ENCODE measurements at regions of chr2 and their contacts with region 1.

Region 1: GRCh38 chr2:157336137-157337010 is 10.8 kb upstream of the ERMN start:
- DNase-seq: peak; percentile 21
- H3K4me3 ChIP-seq: peak overlapping the region in 1 of 2 experiments; percentile 40; a peak in 1 of 4 replicates
- H3K27ac ChIP-seq: no peak overlapping the region
- H3K4me1 ChIP-seq: no peaks in the 10 kb centered on the region
- H3K27me3 ChIP-seq: no peaks in the 10 kb centered on the region; the same call in 1 of the 2 replicates
- CTCF ChIP-seq: peak; percentile 80
- EP300 ChIP-seq: no peak
- RAD21 ChIP-seq: peak; percentile 38

Region 2: GRCh38 chr2:157158111-157158510 is 178.3 kb before region 1 on chr2:
- CTCF ChIA-PET with region 1: no interaction called
- POLR2A ChIA-PET with region 1: no interaction called
- DNase-seq: no peak
- H3K4me3 ChIP-seq: no peak overlapping the region
- H3K27ac ChIP-seq: no peak overlapping the region
- H3K4me1 ChIP-seq: no peaks in the 10 kb centered on the region
- H3K27me3 ChIP-seq: no peaks in the 10 kb centered on the region
- CTCF ChIP-seq: no peak
- EP300 ChIP-seq: no peak
- RAD21 ChIP-seq: no peak

Region 3: DNA sequence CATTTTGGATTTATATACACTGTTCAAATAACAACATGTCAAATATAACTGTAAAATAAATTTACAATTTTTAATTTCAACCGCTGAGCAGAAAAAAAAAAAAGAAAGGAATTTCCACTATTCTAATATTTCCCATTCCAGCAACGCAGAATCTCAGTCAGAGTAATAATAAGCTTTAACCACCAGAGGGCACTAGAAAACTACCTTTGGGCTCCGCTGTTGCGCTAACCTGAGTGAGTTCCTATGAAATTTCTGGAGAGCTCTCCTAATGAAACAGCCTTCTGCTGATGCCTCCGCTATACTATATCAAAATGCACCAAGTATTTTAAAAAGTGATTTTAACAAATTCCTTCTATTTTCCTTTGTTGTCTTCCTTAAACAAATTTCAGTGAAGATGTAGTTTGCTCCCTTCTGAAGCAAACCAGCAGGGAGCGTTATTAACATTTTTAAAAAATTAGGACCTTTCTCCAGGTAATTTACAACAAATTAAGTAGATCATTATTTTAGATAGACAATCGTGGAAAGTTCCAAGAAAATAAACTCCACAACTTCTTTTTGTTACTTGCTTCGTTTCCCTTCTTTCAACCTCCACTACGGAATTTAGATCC is 33.8 kb before region 1 on chr2:
- CTCF ChIA-PET with region 1: interaction called, 123 read pairs
- POLR2A ChIA-PET with region 1: interaction called, 3 read pairs
- DNase-seq: peak; percentile 37
- H3K4me3 ChIP-seq: peak overlapping the region in 1 of 2 experiments; percentile 14; a peak in 1 of 4 replicates
- H3K27ac ChIP-seq: no peak overlapping the region
- H3K4me1 ChIP-seq: 0 out of 4 replicates have a peak, but pooled peaks cover 0 to 3% of the 10 kb centered on the region in 2 experiments
- H3K27me3 ChIP-seq: no peaks in the 10 kb centered on the region
- CTCF ChIP-seq: peak; percentile 88
- EP300 ChIP-seq: no peak
- RAD21 ChIP-seq: peak; percentile 81

Region 4: GRCh38 chr2:157321466-157321865 is 14.9 kb before region 1 on chr2:
- CTCF ChIA-PET with region 1: interaction called, 67 read pairs
- POLR2A ChIA-PET with region 1: no interaction called
- DNase-seq: no peak
- H3K4me3 ChIP-seq: no peak overlapping the region
- H3K27ac ChIP-seq: no peak overlapping the region
- H3K4me1 ChIP-seq: no peaks in the 10 kb centered on the region
- H3K27me3 ChIP-seq: peaks cover 24% of the 10 kb centered on the region; the same call in 1 of the 2 replicates
- CTCF ChIP-seq: no peak
- EP300 ChIP-seq: no peak
- RAD21 ChIP-seq: no peak

Region 5: DNA sequence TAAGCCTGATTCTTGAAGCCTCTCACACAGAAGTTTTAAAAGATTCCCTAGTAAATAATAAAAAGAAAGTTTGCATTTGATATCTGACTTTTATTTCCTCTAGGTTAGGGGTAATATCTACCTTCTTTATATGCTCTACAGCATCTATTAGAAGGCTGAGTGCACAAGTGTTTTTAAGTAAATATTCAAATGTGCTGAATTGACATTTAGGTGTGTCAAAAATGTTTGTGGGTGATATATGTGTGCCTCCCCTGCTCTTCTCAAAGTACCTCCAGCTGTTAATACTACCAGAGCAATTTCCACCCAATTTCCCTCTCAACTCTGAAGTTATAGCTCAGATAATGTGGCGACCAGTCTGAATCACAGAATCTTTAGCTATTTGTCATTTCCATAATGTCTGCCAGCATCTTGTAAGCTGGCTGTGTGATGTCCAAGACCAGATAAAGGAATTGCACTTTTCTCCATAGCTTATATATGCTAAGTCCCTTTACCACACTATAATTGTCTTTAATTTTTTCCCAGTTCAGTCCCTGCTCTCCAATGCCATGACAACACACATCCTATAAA is 13.7 kb after region 1 on chr2:
- CTCF ChIA-PET with region 1: interaction called, 36 read pairs
- POLR2A ChIA-PET with region 1: no interaction called
- DNase-seq: no peak
- H3K4me3 ChIP-seq: no peak overlapping the region
- H3K27ac ChIP-seq: no peak overlapping the region
- H3K4me1 ChIP-seq: no peaks in the 10 kb centered on the region
- H3K27me3 ChIP-seq: no peaks in the 10 kb centered on the region; the same call in 1 of the 2 replicates
- CTCF ChIP-seq: no peak
- EP300 ChIP-seq: no peak
- RAD21 ChIP-seq: no peak

Region 6: GRCh38 chr2:157367704-157368103 is 31.3 kb after region 1 on chr2:
- CTCF ChIA-PET with region 1: interaction called, 11 read pairs
- POLR2A ChIA-PET with region 1: no interaction called
- DNase-seq: no peak
- H3K4me3 ChIP-seq: no peak overlapping the region
- H3K27ac ChIP-seq: no peak overlapping the region
- H3K4me1 ChIP-seq: no peaks in the 10 kb centered on the region
- H3K27me3 ChIP-seq: no peaks in the 10 kb centered on the region
- CTCF ChIP-seq: no peak
- EP300 ChIP-seq: no peak
- RAD21 ChIP-seq: no peak

Measured in SK-N-SH (cell line).